CD14-positive monocyte (primary cell): ENCODE measurements at regions of chr7 and their contacts with region 1.

Region 1: DNA sequence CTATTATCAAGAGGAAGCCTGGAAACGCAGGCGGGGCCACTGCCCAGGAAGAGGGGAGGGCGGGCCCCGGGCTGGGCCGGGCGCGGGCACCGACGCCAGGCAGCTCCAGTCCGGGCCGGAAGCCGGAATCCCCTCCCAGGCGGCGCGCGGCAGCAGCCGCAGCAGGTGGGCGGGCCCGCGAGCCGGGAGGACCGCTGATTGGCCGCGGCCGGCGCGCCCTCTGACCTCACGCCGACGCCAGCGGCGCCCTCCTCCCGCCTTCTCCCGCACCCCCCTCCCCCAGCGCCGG is 438 bp downstream of the BCL7B start:
- DNase-seq: peak; percentile 93 to 94 (median 93)
- H3K4me3 ChIP-seq: peak overlapping the region; percentile 73 to 99 (median 75)
- H3K4me3 Mint-ChIP-seq: peak overlapping the region; percentile 86 to 92
- H3K27ac ChIP-seq: peak overlapping the region; percentile 87 to 93
- H3K27ac Mint-ChIP-seq: peak overlapping the region; percentile 93 to 98 (median 96)
- H3K4me1 ChIP-seq: peaks cover 21 to 23% of the 10 kb centered on the region in 2 donors
- H3K4me1 Mint-ChIP-seq: peaks cover 34% of the 10 kb centered on the region
- H3K27me3 ChIP-seq: no peaks in the 10 kb centered on the region
- H3K27me3 Mint-ChIP-seq: peaks cover 1 to 7% (median 5%) of the 10 kb centered on the region in 3 donors
- CTCF ChIP-seq: no peak

Region 2: GRCh38 chr7:73578342-73579127 is 21.5 kb after region 1 on chr7 and contains the start of gene TBL2:
- intact Hi-C with region 1: loop called in 1 of 2 experiments (anchors 2 kb)
- DNase-seq: peak; percentile 97 to 100 (median 98)
- H3K4me3 ChIP-seq: peak within 1 kb of the TSS; percentile 80 to 92 (median 91)
- H3K4me3 Mint-ChIP-seq: peak within 1 kb of the TSS; percentile 88 to 94
- H3K27ac ChIP-seq: peak within 1 kb of the TSS; percentile 87 to 90
- H3K27ac Mint-ChIP-seq: peak within 1 kb of the TSS; percentile 98 to 99 (median 99)
- H3K4me1 ChIP-seq: peaks cover 59 to 69% of the 10 kb centered on the region in 2 donors
- H3K4me1 Mint-ChIP-seq: peaks cover 47% of the 10 kb centered on the region
- H3K27me3 ChIP-seq: no peaks in the 10 kb centered on the region
- H3K27me3 Mint-ChIP-seq: no peaks in the 10 kb centered on the region
- CTCF ChIP-seq: peak; percentile 4
- polyA plus RNA-seq, gene TBL2: 10.4 to 40.1 (median 26.2) TPM